IMR-90 (cell line): ENCODE measurements at regions of chr6 and their contacts with region 1.

Region 1: DNA sequence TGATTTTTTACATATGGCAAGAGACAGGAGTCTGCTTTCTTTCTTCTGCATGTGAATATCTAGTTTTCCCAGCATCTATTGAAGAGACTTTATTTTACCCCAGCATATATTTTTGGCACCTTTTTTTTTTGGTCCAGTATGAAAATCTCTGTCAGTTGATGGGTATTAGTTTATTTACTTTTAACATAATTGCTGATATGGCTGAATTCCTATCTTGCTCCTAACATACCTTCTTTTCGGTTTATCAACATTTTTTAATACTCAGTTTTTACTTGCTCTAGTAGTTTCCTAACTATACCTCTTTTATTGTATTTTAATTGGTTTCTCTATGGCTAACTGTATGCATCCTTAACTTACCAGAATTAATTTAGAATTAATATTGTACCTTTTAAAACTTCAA is 77.5 kb upstream of the PDE7B start:
- DNase-seq: no peak
- ATAC-seq: no peak
- H3K4me3 ChIP-seq: no peak overlapping the region
- H3K27ac ChIP-seq: no peak overlapping the region
- H3K4me1 ChIP-seq: no peaks in the 10 kb centered on the region
- H3K27me3 ChIP-seq: no peaks in the 10 kb centered on the region
- CTCF ChIP-seq: no peak
- POLR2A ChIP-seq: no peak
- RAD21 ChIP-seq: no peak

Region 2: DNA sequence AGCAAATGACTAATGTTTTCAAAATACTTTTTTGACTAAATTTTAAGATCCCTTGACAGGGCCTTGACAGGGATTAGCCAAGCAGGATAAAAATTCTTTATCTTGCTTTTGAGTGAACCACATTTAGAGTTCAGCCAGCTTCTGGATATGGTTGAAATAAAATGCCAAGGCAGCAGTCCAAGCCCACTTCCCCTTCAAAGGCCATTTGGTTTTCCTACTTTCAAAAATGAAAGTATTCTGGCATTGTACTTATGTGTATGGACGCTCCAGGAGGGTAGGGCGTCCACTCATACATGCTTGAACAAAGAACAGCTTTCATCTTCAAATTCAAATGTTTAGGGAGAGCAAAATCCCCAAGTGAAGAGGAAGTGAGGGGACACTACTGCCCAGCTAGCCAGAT is 598.0 kb after region 1 on chr6:
- CTCF ChIA-PET with region 1: no interaction called
- POLR2A ChIA-PET with region 1: no interaction called
- dilution Hi-C with region 1: no loop called
- in situ Hi-C with region 1: no loop called
- intact Hi-C with region 1: loop called (anchors 5 kb)
- DNase-seq: no peak
- ATAC-seq: no peak
- H3K4me3 ChIP-seq: no peak overlapping the region
- H3K27ac ChIP-seq: no peak overlapping the region
- H3K4me1 ChIP-seq: no peaks in the 10 kb centered on the region
- H3K27me3 ChIP-seq: peaks cover 6% of the 10 kb centered on the region
- CTCF ChIP-seq: no peak
- POLR2A ChIP-seq: no peak
- RAD21 ChIP-seq: no peak